SK-N-SH (cell line): ENCODE measurements at regions of chr1 and their contacts with region 1.

Region 1: GRCh38 chr1:45569962-45570581 is 13.8 kb upstream of the NASP start:
- DNase-seq: peak; percentile 73
- H3K4me3 ChIP-seq: no peak overlapping the region
- H3K27ac ChIP-seq: no peak overlapping the region
- H3K4me1 ChIP-seq: peaks cover 0 to 5% of the 10 kb centered on the region in 2 experiments; a peak in 1 of 4 replicates
- H3K27me3 ChIP-seq: no peaks in the 10 kb centered on the region
- CTCF ChIP-seq: peak; percentile 98
- EP300 ChIP-seq: no peak
- RAD21 ChIP-seq: peak; percentile 94

Region 2: DNA sequence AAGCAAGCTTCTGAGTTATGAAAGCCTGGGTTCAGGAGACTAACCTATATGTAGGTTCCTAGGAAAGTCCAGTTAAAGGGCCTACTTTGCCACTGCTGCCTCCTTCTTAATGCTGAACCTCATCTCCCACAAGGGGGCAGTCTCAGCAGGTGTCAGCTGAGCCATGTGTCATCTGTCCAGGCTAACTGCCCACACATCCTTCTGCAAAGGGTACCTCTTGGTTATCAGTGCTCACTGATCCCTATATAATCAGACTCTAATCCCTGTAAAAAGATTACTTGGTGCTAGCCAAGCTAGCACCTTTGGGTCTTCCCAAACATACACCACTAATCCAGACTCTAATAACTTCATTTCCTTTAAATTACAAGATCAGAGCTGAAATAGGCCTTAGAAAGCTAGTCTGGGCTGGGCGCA is 57.4 kb before region 1 on chr1:
- CTCF ChIA-PET with region 1: interaction called, 164 read pairs
- POLR2A ChIA-PET with region 1: no interaction called
- DNase-seq: peak; percentile 66
- H3K4me3 ChIP-seq: no peak overlapping the region
- H3K27ac ChIP-seq: no peak overlapping the region
- H3K4me1 ChIP-seq: no peaks in the 10 kb centered on the region
- H3K27me3 ChIP-seq: no peaks in the 10 kb centered on the region
- CTCF ChIP-seq: peak; percentile 79
- EP300 ChIP-seq: no peak
- RAD21 ChIP-seq: peak; percentile 75

Region 3: DNA sequence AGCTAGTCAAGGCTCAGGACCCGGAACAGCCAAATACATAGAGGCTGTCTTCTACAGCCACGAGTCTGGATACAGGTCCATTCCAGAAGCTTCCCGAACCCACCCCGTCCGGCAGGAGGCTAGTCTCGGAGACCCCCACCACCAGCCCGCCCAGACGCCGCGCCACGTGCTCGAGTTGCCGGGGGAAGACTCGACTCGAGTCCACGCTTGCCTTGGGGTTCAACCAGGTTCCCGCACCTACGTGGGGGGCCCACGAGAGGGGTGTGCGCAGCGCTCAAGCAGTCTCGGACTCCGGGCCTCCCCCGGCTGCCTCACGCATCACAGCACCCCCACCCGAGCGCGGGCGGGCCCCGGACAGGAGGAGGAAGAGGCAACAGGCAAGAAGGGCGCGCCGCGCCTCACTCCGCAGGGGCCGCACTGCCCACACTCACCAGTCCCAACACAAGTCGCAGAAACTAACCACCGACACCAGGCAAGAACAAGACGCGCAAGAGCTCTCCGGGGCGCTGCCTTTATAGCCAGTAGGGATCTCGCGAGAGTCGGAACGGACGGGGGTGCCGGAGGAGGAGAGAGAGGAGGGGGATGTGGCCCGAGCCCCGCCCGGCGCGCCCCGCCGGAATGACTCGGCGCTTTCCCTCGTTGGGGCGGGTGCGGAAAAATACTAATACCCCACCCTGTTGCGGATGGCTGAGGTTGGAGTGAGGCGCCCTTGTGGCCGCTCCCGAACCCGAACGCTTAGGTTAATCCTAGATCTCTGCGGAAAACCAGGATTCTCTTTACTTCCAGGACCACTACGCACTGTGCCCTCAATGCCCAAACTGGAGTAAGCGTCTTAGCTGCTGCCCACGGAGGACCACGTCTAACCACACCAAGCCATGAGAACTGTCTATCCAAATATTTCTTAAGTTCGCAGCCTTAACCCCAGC is 48.4 kb before region 1 on chr1 and contains the start of gene PRDX1:
- CTCF ChIA-PET with region 1: interaction called, 18 read pairs
- POLR2A ChIA-PET with region 1: interaction called, 30 read pairs
- DNase-seq: peak; percentile 97
- H3K4me3 ChIP-seq: peak within 1 kb of the TSS; percentile 75 to 91
- H3K27ac ChIP-seq: peak within 1 kb of the TSS; percentile 92
- H3K4me1 ChIP-seq: peaks cover 6 to 15% of the 10 kb centered on the region in 2 experiments; a peak in 3 of 4 replicates
- H3K27me3 ChIP-seq: no peaks in the 10 kb centered on the region
- CTCF ChIP-seq: peak; percentile 25; the same call in 1 of the 2 replicates
- EP300 ChIP-seq: peak in 1 of 2 experiments; percentile 70; a peak in 2 of 4 replicates
- RAD21 ChIP-seq: no peak
- polyA plus RNA-seq, gene PRDX1: 467 and 551 TPM in 2 replicates

Region 4: GRCh38 chr1:45535988-45536766 is 33.9 kb before region 1 on chr1:
- CTCF ChIA-PET with region 1: interaction called, 14 read pairs
- POLR2A ChIA-PET with region 1: no interaction called
- DNase-seq: no peak
- H3K4me3 ChIP-seq: no peak overlapping the region
- H3K27ac ChIP-seq: no peak overlapping the region
- H3K4me1 ChIP-seq: no peaks in the 10 kb centered on the region
- H3K27me3 ChIP-seq: no peaks in the 10 kb centered on the region
- CTCF ChIP-seq: no peak
- EP300 ChIP-seq: no peak
- RAD21 ChIP-seq: no peak

Region 5: GRCh38 chr1:45550401-45551351 is 19.4 kb before region 1 on chr1 and contains the start of gene AKR1A1:
- CTCF ChIA-PET with region 1: interaction called, 20 read pairs
- POLR2A ChIA-PET with region 1: interaction called, 5 read pairs
- DNase-seq: peak; percentile 90
- H3K4me3 ChIP-seq: peak within 1 kb of the TSS; percentile 69 to 72
- H3K27ac ChIP-seq: peak within 1 kb of the TSS; percentile 80 to 90
- H3K4me1 ChIP-seq: peaks cover 6 to 10% of the 10 kb centered on the region in 2 experiments; a peak in 2 of 4 replicates
- H3K27me3 ChIP-seq: no peaks in the 10 kb centered on the region
- CTCF ChIP-seq: no peak
- EP300 ChIP-seq: no peak
- RAD21 ChIP-seq: no peak
- polyA plus RNA-seq, gene AKR1A1: 156 and 185 TPM in 2 replicates

Region 6: DNA sequence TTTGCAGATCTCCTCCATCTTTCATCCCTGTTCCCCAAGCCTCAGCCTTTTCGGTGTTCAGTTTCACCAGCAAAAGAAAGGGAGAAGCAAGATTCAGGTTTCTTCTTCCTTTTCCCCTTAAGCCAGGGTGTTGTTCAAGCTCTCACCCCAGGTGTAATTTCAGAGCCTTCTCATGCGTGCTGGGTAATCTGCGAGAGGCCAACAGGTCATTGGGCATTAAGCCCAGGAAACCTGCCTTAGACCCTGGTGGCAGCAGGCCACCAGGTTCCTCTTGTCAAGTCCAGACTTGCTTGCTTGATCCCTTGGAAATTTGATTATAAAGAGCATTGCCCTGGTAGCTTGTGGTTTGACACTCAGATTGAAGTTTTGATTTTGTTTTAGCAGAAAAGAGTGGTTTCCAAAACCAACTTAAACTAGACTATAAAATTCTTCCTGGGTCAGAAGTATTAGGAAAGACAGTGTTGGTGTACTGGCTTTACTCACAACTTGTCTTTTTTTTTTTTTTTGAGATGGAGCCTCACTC is 12.6 kb before region 1 on chr1:
- CTCF ChIA-PET with region 1: interaction called, 20 read pairs
- POLR2A ChIA-PET with region 1: no interaction called
- DNase-seq: no peak
- H3K4me3 ChIP-seq: no peak overlapping the region
- H3K27ac ChIP-seq: peak overlapping the region in 1 of 2 experiments; percentile 50; a peak in 2 of 4 replicates
- H3K4me1 ChIP-seq: peaks cover under 1 to 6% of the 10 kb centered on the region in 2 experiments; a peak in 2 of 4 replicates
- H3K27me3 ChIP-seq: no peaks in the 10 kb centered on the region
- CTCF ChIP-seq: no peak
- EP300 ChIP-seq: no peak
- RAD21 ChIP-seq: no peak

Region 7: GRCh38 chr1:45583264-45583665 is 13.2 kb after region 1 on chr1:
- CTCF ChIA-PET with region 1: interaction called, 55 read pairs
- POLR2A ChIA-PET with region 1: no interaction called
- DNase-seq: peak; percentile 95
- H3K4me3 ChIP-seq: peak overlapping the region; percentile 76 to 97
- H3K27ac ChIP-seq: peak overlapping the region; percentile 62 to 90
- H3K4me1 ChIP-seq: peaks cover 5 to 9% of the 10 kb centered on the region in 2 experiments; a peak in 3 of 4 replicates
- H3K27me3 ChIP-seq: no peaks in the 10 kb centered on the region
- CTCF ChIP-seq: no peak
- EP300 ChIP-seq: no peak
- RAD21 ChIP-seq: no peak